ENCODE measurements at regions of chr3 and their contacts with region 1.

Region 1: GRCh38 chr3:194458131-194458530 is 28.7 kb downstream of the ATP13A3 start:
- DNase-seq: no peak
- H3K4me3 Mint-ChIP-seq: no peak overlapping the region
- H3K27ac Mint-ChIP-seq: no peak overlapping the region
- H3K4me1 Mint-ChIP-seq: peaks cover 3% of the 10 kb centered on the region
- H3K27me3 Mint-ChIP-seq: no peaks in the 10 kb centered on the region

Region 2: GRCh38 chr3:194418671-194419070 is 39.5 kb before region 1 on chr3:
- intact Hi-C with region 1: loop called (anchors 5 kb)
- DNase-seq: no peak
- H3K4me3 Mint-ChIP-seq: no peak overlapping the region
- H3K27ac Mint-ChIP-seq: no peak overlapping the region
- H3K4me1 Mint-ChIP-seq: peaks cover 2% of the 10 kb centered on the region
- H3K27me3 Mint-ChIP-seq: no peaks in the 10 kb centered on the region